Activated B cell treated with CpG ODN at 0.5 μM for 24 hours (primary cell): ENCODE measurements at regions of chr12 and their contacts with region 1.

Region 1: GRCh38 chr12:5003020-5003666 is 40.5 kb upstream of the KCNA5 start:
- DNase-seq: peak; percentile 36
- ATAC-seq: peak; percentile 83
- H3K4me3 Mint-ChIP-seq: no peak overlapping the region
- H3K27ac Mint-ChIP-seq: no peak overlapping the region
- H3K4me1 Mint-ChIP-seq: no peaks in the 10 kb centered on the region
- H3K27me3 Mint-ChIP-seq: peaks cover 15% of the 10 kb centered on the region
- CTCF ChIP-seq: peak; percentile 56

Region 2: DNA sequence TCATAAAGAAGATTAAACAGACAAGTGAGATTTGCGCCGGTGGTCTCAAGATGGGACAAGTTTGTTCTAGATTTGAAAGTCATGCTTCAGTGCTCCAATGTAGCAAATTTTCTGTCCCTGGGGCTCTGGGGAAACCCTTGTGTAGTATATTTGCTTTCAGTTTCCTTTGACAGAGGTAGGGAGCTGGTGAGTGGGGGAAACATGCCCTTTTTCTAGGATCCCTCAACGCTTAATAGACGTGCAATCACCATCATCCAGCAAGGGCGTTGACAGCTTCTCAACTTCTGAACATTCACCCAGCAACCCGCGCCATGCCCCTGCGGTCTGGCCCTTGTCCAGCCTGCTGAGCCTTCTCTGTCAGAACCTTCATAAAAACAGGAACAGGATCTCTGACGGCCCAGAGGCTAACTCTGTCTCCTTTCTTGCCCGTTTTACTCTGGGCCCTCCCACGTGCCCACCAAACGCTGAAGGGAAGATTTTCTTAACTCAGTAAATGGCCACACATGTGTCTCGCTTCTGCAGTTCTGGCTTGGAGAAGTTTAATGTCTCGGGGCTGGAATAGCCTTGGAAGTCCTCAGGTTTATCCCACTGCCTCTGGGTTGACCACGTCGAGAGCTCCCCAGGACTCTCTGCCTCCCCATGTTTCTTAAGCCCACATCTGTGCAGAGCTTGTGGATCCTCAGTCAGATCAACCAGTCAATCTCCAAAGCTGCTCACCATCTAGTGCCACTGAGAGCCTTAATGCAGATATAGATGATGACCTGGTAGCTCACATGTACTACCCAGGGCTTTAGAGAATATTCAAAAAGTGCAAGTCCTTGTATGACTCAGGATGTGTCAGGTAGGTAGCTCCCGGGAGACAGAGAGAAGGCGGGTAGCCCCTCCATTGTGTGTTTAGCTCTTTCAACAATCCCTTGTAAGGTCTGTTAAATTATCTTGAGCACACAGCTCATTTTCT is 787.6 kb before region 1 on chr12:
- CTCF ChIA-PET with region 1: no interaction called
- POLR2A ChIA-PET with region 1: no interaction called
- intact Hi-C with region 1: no loop called
- DNase-seq: peak; percentile 60
- ATAC-seq: peak; percentile 83
- H3K4me3 Mint-ChIP-seq: peak overlapping the region; percentile 80
- H3K27ac Mint-ChIP-seq: peak overlapping the region; percentile 93
- H3K4me1 Mint-ChIP-seq: peaks cover 49% of the 10 kb centered on the region
- H3K27me3 Mint-ChIP-seq: no peaks in the 10 kb centered on the region
- CTCF ChIP-seq: no peak

Region 3: GRCh38 chr12:4356041-4356327 is 647.2 kb before region 1 on chr12:
- CTCF ChIA-PET with region 1: no interaction called
- POLR2A ChIA-PET with region 1: no interaction called
- intact Hi-C with region 1: loop called (anchors 10 kb)
- DNase-seq: no peak
- ATAC-seq: no peak
- H3K4me3 Mint-ChIP-seq: no peak overlapping the region
- H3K27ac Mint-ChIP-seq: no peak overlapping the region
- H3K4me1 Mint-ChIP-seq: no peaks in the 10 kb centered on the region
- H3K27me3 Mint-ChIP-seq: no peaks in the 10 kb centered on the region
- CTCF ChIP-seq: no peak

Region 4: DNA sequence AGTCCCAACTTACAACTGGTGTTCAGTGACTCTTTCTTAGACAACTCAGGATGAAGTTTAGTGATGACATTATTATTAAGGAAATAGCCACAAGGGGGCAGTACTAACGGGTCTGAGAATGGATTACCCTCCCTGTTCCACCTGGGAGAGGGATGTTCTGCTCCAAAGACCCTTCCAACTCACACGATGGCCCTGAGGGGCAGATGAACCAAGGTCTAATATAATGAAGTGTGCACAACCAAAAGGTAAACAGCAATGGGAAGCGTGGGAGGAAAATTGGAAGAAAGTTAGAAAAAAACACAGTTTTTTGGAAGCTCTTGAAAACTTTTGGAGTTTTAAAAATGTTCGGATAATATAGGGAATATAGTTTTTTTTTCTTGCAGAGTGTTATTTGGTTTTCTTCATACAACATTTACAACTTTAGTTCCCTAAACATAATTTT is 581.5 kb before region 1 on chr12:
- CTCF ChIA-PET with region 1: no interaction called
- POLR2A ChIA-PET with region 1: no interaction called
- intact Hi-C with region 1: loop called (anchors 5 kb)
- DNase-seq: no peak
- ATAC-seq: peak; percentile 31
- H3K4me3 Mint-ChIP-seq: no peak overlapping the region
- H3K27ac Mint-ChIP-seq: no peak overlapping the region
- H3K4me1 Mint-ChIP-seq: no peaks in the 10 kb centered on the region
- H3K27me3 Mint-ChIP-seq: peaks cover 5% of the 10 kb centered on the region
- CTCF ChIP-seq: no peak

Region 5: GRCh38 chr12:4819654-4820053 is 183.5 kb before region 1 on chr12:
- CTCF ChIA-PET with region 1: no interaction called
- POLR2A ChIA-PET with region 1: no interaction called
- intact Hi-C with region 1: loop called (anchors 1 kb)
- DNase-seq: no peak
- ATAC-seq: peak; percentile 84
- H3K4me3 Mint-ChIP-seq: peak overlapping the region; percentile 33
- H3K27ac Mint-ChIP-seq: peak overlapping the region; percentile 67
- H3K4me1 Mint-ChIP-seq: peaks cover 63% of the 10 kb centered on the region
- H3K27me3 Mint-ChIP-seq: peaks cover 5% of the 10 kb centered on the region
- CTCF ChIP-seq: no peak